Activated CD8-positive, alpha-beta T cell treated with anti-CD3 and anti-CD28 coated beads for 36 hours (primary cell): ENCODE measurements at regions of chr1 and their contacts with region 1.

Region 1: DNA sequence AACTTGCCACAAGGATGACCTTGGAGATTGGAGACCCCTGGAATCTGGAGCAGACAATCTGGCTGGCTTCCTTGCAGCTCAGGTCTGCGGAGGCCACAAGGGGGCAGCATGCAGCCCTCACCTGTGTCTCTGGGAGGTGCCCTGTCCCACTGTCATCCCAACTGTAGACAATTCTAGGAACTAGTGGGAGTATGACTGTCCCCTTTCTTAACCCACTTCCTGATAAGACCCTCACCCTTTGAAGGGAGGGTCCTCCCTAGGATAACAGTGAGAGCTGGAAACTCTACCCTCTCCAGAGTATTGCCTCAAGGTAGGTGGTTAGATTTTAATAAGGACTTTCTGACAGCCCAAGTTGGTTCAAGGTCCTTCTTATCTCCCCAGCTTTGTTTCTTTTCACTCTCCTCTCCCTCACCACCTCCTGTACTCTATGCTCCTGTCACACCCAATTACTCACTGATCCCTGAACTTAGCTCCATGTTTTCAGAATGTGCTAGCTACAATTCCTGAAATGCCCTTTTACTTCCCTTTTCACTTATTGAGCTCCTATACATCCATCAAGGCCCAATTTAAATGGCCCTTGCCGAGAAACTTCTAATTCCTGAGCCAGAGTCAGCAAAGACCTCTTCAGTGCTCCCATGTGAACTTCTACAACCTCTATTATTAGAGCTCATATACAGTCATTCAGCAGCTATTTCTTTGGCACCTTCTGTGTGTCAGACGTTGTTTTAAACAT is 9.2 kb upstream of the KCNQ4 start:
- DNase-seq: peak; percentile 82
- ATAC-seq: peak; percentile 87
- H3K4me3 Mint-ChIP-seq: no peak overlapping the region
- H3K27ac Mint-ChIP-seq: peak overlapping the region; percentile 39
- H3K4me1 Mint-ChIP-seq: peaks cover 3% of the 10 kb centered on the region
- H3K27me3 Mint-ChIP-seq: no peaks in the 10 kb centered on the region
- CTCF ChIP-seq: peak; percentile 87

Region 2: GRCh38 chr1:40691538-40692428 is 82.6 kb before region 1 on chr1 and contains the start of gene NFYC:
- CTCF ChIA-PET with region 1: interaction called, 23 read pairs
- POLR2A ChIA-PET with region 1: interaction called, 6 read pairs
- intact Hi-C with region 1: no loop called
- DNase-seq: peak; percentile 98
- ATAC-seq: peak; percentile 86
- H3K4me3 Mint-ChIP-seq: peak within 1 kb of the TSS; percentile 87
- H3K27ac Mint-ChIP-seq: peak within 1 kb of the TSS; percentile 93
- H3K4me1 Mint-ChIP-seq: peaks cover 50% of the 10 kb centered on the region
- H3K27me3 Mint-ChIP-seq: no peaks in the 10 kb centered on the region
- CTCF ChIP-seq: no peak
- total RNA-seq, gene NFYC: 45.6 to 53.8 TPM

Region 3: DNA sequence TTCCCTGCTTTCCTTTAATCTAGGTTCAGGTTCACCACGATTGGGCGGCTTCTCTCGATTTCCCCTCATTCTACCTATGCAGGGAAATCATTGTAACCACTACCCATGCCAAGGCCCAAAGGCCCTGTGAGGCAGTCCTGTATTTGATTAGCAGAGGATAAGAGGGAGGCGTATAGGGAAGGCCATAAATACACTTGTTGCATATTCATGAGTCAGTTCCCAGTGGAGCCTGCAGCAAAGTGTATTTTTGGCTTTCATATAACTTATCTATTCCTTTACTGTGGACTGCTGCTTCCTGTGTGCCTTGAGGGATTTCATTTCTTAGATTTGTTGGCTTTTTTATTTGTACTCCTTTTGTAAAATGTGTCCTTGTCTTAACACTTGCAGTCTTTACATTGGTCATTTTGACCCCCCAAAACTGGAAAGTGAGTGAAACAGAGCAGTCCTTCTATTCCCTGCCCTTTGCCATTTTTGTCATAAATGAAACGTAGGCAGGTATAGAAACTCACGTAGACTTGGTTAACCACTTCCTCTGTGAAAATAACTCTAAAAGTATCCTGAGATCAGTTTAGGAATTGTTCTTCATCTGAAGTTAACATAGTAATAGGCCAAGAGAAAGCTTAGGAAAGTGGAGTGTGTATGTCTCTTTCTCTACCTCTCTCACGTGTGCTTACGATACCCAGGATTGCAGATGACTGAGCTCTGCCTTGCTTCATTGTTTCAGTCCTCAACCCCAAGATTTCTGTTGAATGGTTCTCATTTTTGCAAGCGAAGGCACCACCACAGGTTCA is 10.5 kb before region 1 on chr1:
- CTCF ChIA-PET with region 1: interaction called, 92 read pairs
- POLR2A ChIA-PET with region 1: interaction called, 12 read pairs
- intact Hi-C with region 1: no loop called
- DNase-seq: peak; percentile 17
- ATAC-seq: peak; percentile 73
- H3K4me3 Mint-ChIP-seq: peak overlapping the region; percentile 51
- H3K27ac Mint-ChIP-seq: peak overlapping the region; percentile 96
- H3K4me1 Mint-ChIP-seq: peaks cover 40% of the 10 kb centered on the region
- H3K27me3 Mint-ChIP-seq: no peaks in the 10 kb centered on the region
- CTCF ChIP-seq: no peak

Region 4: DNA sequence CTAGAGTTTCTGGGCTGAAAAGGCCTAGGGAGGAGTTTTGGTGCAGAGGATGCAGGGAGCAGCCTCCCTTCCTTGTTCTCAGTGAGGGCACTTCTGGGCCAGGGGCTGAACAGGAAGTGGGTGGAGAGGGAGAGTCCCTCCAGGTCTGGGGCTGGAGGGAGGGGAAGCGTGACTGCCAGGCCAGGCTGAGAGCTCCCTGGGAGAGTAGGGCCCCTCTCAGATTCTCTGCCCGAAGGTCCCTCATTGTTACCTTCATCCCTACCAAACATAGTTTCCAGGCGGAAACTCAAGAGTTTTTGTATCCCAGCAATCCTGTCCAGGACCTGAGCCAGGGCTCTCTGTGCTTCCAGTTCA is 51.0 kb after region 1 on chr1:
- CTCF ChIA-PET with region 1: interaction called, 11 read pairs
- POLR2A ChIA-PET with region 1: no interaction called
- intact Hi-C with region 1: no loop called
- DNase-seq: peak; percentile 48
- ATAC-seq: peak; percentile 87
- H3K4me3 Mint-ChIP-seq: no peak overlapping the region
- H3K27ac Mint-ChIP-seq: no peak overlapping the region
- H3K4me1 Mint-ChIP-seq: peaks cover 14% of the 10 kb centered on the region
- H3K27me3 Mint-ChIP-seq: no peaks in the 10 kb centered on the region
- CTCF ChIP-seq: no peak

Region 5: DNA sequence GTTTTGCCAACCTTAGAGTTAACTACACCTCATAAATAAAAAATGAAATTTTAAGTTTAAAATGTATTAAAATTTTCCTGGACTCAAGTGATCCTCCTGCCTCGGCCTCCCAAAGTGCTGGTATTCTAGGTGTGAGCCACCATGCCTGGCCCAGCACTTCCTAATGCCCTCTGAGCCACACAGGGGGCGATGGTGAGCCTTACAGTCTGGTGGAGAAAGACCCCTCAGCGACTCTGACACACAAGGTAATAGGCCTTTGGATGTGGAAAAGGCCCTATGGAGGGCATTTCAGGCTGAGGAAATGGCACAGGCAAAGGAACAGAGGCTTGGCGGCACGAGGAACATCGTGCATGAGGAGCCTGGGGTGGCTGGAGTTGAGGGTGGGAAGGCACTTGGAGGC is 81.1 kb after region 1 on chr1:
- CTCF ChIA-PET with region 1: interaction called, 169 read pairs
- POLR2A ChIA-PET with region 1: interaction called, 9 read pairs
- intact Hi-C with region 1: loop called (anchors 2 kb)
- DNase-seq: peak; percentile 63
- ATAC-seq: peak; percentile 58
- H3K4me3 Mint-ChIP-seq: no peak overlapping the region
- H3K27ac Mint-ChIP-seq: no peak overlapping the region
- H3K4me1 Mint-ChIP-seq: no peaks in the 10 kb centered on the region
- H3K27me3 Mint-ChIP-seq: no peaks in the 10 kb centered on the region
- CTCF ChIP-seq: peak; percentile 53

Region 6: DNA sequence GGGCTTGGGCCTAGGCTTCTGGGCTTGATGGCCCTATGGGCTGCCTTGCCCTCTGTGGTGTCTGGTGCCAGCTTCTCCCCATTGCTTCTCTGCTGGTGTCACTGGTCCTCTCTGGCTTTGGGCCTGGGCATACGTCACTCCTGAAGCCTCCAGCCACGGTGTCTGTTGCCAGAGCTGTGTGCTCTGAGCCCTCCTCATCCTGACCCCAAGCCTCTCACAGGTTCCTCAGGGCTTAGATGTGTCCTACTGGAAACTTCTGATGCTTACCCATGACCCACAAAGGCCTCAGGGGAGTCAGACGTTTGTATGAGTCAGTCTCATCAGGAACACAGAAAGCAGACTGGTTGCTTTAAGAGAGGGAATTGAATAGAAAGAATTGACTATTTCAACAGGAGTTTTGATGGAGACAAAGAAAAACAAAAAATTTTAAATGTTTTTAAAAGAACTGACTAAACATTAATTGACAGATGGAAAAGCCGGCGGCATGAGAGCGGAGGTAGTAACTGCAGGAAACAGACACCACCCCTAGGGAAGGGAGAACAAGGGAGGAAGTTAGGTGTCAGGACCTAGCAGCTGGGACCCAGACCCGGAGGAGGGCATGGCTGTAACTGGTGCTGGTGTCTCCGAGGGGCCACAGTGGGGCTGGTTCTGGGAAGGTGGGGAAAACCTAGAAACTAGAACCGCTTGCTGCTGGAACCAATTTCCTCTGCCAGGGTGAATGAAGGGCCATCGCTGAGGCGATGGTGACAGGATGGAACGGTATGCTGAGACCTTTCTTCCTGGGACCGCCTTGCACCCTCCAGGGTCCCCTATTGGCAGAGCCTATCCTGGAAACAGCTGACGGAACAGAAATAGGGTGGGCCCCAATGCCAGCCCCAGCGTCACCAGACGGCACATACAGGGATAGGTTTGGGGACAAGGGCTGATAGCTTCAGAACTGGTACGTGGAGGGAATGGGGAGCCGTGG is 127.7 kb after region 1 on chr1:
- CTCF ChIA-PET with region 1: no interaction called
- POLR2A ChIA-PET with region 1: no interaction called
- intact Hi-C with region 1: no loop called
- DNase-seq: no peak
- ATAC-seq: no peak
- H3K4me3 Mint-ChIP-seq: no peak overlapping the region
- H3K27ac Mint-ChIP-seq: no peak overlapping the region
- H3K4me1 Mint-ChIP-seq: peaks cover 5% of the 10 kb centered on the region
- H3K27me3 Mint-ChIP-seq: no peaks in the 10 kb centered on the region
- CTCF ChIP-seq: no peak